Ascending aorta (tissue), 2 donors: ENCODE measurements at regions of chr2 and their contacts with region 1.

Region 1: GRCh38 chr2:177164584-177165052 is 48.0 kb upstream of the HNRNPA3 start:
- DNase-seq: peak; percentile 56 to 92
- H3K4me3 ChIP-seq: peak overlapping the region; percentile 53 to 60
- H3K27ac ChIP-seq: peak overlapping the region; percentile 80 to 91
- H3K4me1 ChIP-seq: peaks cover 0 to 8% of the 10 kb centered on the region in 2 donors
- H3K27me3 ChIP-seq: no peaks in the 10 kb centered on the region
- CTCF ChIP-seq: peak; percentile 94 to 100 (median 100)

Region 2: GRCh38 chr2:176554101-176555048 is 610.2 kb before region 1 on chr2:
- intact Hi-C with region 1: loop called (anchors 5 kb)
- DNase-seq: peak in 1 of 2 donors; percentile 65
- H3K4me3 ChIP-seq: peak overlapping the region; percentile 52 to 59
- H3K27ac ChIP-seq: peak overlapping the region; percentile 64 to 66
- H3K4me1 ChIP-seq: peaks cover 7 to 11% of the 10 kb centered on the region in 2 donors
- H3K27me3 ChIP-seq: no peaks in the 10 kb centered on the region
- CTCF ChIP-seq: peak; percentile 71 to 85 (median 81)

Region 3: GRCh38 chr2:177263451-177264208 is 99.0 kb after region 1 on chr2:
- intact Hi-C with region 1: loop called (anchors 1 kb)
- DNase-seq: peak; percentile 87 to 99
- H3K4me3 ChIP-seq: peak overlapping the region; percentile 76 to 97
- H3K27ac ChIP-seq: peak overlapping the region; percentile 99 to 100
- H3K4me1 ChIP-seq: peaks cover 5 to 30% of the 10 kb centered on the region in 2 donors
- H3K27me3 ChIP-seq: no peaks in the 10 kb centered on the region
- CTCF ChIP-seq: peak; percentile 86 to 94 (median 93)

Region 4: GRCh38 chr2:177392373-177393202 is 228.0 kb after region 1 on chr2 and contains the start of gene AGPS:
- intact Hi-C with region 1: loop called (anchors 5 kb)
- DNase-seq: peak; percentile 12 to 84
- H3K4me3 ChIP-seq: peak within 1 kb of the TSS; percentile 75 to 76
- H3K27ac ChIP-seq: peak within 1 kb of the TSS; percentile 44 to 56
- H3K4me1 ChIP-seq: peaks cover 0 to 6% of the 10 kb centered on the region in 2 donors
- H3K27me3 ChIP-seq: no peaks in the 10 kb centered on the region
- CTCF ChIP-seq: peak in 1 of 3 experiments; percentile 18
- total RNA-seq, gene AGPS: 15.9 TPM

Region 5: GRCh38 chr2:177552422-177553175 is 388.0 kb after region 1 on chr2:
- intact Hi-C with region 1: loop called (anchors 5 kb)
- DNase-seq: peak; percentile 46 to 92
- H3K4me3 ChIP-seq: peak overlapping the region; percentile 89 to 96
- H3K27ac ChIP-seq: peak overlapping the region; percentile 87 to 95
- H3K4me1 ChIP-seq: peaks cover 0 to 3% of the 10 kb centered on the region in 2 donors
- H3K27me3 ChIP-seq: no peaks in the 10 kb centered on the region
- CTCF ChIP-seq: no peak